ENCODE measurements at regions of chr11 and their contacts with region 1.

Region 1: GRCh38 chr11:74702383-74703007 is 28.7 kb downstream of the CHRDL2 start:
- DNase-seq: no peak
- ATAC-seq: peak; percentile 80
- H3K4me3 ChIP-seq: no peak overlapping the region
- H3K27ac ChIP-seq: no peak overlapping the region
- H3K4me1 ChIP-seq: no peaks in the 10 kb centered on the region
- H3K27me3 ChIP-seq: no peaks in the 10 kb centered on the region
- CTCF ChIP-seq: peak; percentile 98

Region 2: DNA sequence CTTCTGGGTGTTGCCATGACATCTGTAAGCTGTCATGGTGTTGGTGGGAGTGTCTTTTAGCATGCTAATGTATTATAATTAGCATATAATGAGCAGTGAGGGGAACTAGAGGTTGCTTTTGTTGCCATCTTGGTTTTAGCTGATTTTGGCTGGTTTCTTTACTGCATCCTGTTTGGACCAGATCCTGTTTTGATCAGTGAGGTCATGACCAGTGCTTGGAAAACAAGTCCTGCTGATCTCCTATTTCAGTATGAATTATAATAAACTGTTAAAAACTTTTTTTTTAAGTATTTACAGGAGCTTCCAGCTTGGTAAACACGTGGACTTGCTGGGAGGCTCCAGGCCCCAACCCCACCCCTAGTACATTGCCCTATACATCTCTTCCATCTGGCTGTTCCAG is 360.6 kb before region 1 on chr11:
- CTCF ChIA-PET with region 1: no interaction called
- POLR2A ChIA-PET with region 1: interaction called, 20 read pairs
- in situ Hi-C with region 1: no loop called
- intact Hi-C with region 1: no loop called
- DNase-seq: no peak
- ATAC-seq: no peak
- H3K4me3 ChIP-seq: no peak overlapping the region
- H3K27ac ChIP-seq: no peak overlapping the region
- H3K4me1 ChIP-seq: no peaks in the 10 kb centered on the region
- H3K27me3 ChIP-seq: no peaks in the 10 kb centered on the region
- CTCF ChIP-seq: no peak

Region 3: GRCh38 chr11:74691755-74692154 is 10.7 kb before region 1 on chr11:
- CTCF ChIA-PET with region 1: interaction called, 13 read pairs
- POLR2A ChIA-PET with region 1: no interaction called
- in situ Hi-C with region 1: no loop called
- intact Hi-C with region 1: no loop called
- DNase-seq: no peak
- ATAC-seq: no peak
- H3K4me3 ChIP-seq: no peak overlapping the region
- H3K27ac ChIP-seq: no peak overlapping the region
- H3K4me1 ChIP-seq: no peaks in the 10 kb centered on the region
- H3K27me3 ChIP-seq: no peaks in the 10 kb centered on the region
- CTCF ChIP-seq: no peak

Region 4: DNA sequence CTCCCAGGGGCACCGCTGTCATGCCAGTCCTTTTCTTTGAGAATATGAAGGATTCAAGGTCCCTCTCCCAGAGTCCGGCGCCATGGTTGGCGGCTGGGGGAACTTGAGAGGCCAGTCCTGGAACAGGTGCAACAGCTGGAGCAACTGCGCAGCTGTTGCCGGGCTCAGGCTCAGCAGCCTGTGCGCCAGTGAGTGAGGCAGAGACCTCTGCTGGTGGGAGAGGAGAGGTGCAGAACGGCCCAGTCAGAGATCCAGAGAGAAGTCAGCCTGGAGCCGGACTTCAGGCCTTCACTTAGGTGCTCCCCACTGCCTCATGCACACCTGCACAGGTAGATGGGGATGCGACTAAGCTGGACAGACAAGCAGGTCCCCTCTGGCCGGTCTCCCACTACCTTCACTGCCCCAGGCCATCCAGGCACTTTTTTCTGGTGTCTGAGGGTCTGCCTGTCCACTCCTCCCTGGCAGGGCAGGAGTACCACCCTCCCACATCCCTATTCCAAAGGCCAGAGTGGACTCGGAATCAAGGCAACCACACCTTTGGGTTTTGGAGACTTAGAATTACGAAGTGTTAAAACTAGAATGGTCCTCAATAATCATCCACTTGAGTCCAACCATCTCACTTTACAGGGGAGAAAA is 24.2 kb after region 1 on chr11:
- CTCF ChIA-PET with region 1: interaction called, 70 read pairs
- POLR2A ChIA-PET with region 1: no interaction called
- in situ Hi-C with region 1: no loop called
- intact Hi-C with region 1: loop called (anchors 1 kb)
- DNase-seq: no peak
- ATAC-seq: peak; percentile 95
- H3K4me3 ChIP-seq: no peak overlapping the region
- H3K27ac ChIP-seq: no peak overlapping the region
- H3K4me1 ChIP-seq: 0 out of 2 replicates have a peak, but pooled peaks cover 4% of the 10 kb centered on the region
- H3K27me3 ChIP-seq: peaks cover 44% of the 10 kb centered on the region
- CTCF ChIP-seq: peak; percentile 98

Region 5: GRCh38 chr11:74739546-74740270 is 37.2 kb after region 1 on chr11:
- CTCF ChIA-PET with region 1: interaction called, 24 read pairs
- POLR2A ChIA-PET with region 1: no interaction called
- in situ Hi-C with region 1: no loop called
- intact Hi-C with region 1: loop called (anchors 1 kb)
- DNase-seq: no peak
- ATAC-seq: peak; percentile 95
- H3K4me3 ChIP-seq: no peak overlapping the region
- H3K27ac ChIP-seq: no peak overlapping the region
- H3K4me1 ChIP-seq: 0 out of 2 replicates have a peak, but pooled peaks cover 3% of the 10 kb centered on the region
- H3K27me3 ChIP-seq: peaks cover 12% of the 10 kb centered on the region
- CTCF ChIP-seq: peak; percentile 98

Region 6: DNA sequence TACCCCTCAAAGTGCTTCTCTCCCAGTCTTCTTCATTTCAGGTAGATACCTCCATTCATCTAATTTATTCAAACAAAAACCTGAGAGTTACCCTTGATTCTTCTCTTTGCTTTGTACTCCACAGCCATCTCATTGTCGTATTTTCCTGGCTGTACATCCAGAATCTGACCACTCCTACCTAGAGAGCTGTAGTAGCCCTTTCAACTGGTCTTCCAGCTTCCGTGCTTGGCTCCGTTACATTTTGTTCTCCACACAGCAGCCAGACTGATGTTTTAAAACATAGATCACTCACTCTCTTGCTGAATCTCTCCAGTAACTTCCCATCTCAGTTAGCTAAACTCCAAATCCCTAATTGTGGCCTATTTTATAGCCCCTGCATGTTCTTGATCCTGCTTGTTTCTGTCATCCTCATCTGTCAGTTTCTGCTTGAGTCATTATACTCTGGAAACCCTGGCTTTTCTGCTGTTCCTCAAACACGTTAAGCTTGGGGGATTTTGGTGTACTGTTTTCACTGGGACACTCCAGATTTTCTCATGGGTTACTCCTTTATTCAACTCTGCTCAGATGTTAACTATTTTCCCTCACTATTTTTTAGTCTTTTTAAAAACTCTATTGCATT is 254.0 kb after region 1 on chr11:
- CTCF ChIA-PET with region 1: no interaction called
- POLR2A ChIA-PET with region 1: no interaction called
- in situ Hi-C with region 1: no loop called
- intact Hi-C with region 1: no loop called
- DNase-seq: no peak
- ATAC-seq: no peak
- H3K4me3 ChIP-seq: no peak overlapping the region
- H3K27ac ChIP-seq: no peak overlapping the region
- H3K4me1 ChIP-seq: 0 out of 2 replicates have a peak, but pooled peaks cover 2% of the 10 kb centered on the region
- H3K27me3 ChIP-seq: no peaks in the 10 kb centered on the region
- CTCF ChIP-seq: no peak

Measured in Panc1 (cell line).